ENCODE measurements at regions of chr2 and their contacts with region 1.

Region 1: GRCh38 chr2:35410431-35411061 is 945.0 kb upstream of the CRIM1 start:
- DNase-seq: peak; percentile 33
- ATAC-seq: peak; percentile 79
- H3K4me3 ChIP-seq: no peak overlapping the region
- H3K27ac ChIP-seq: no peak overlapping the region
- H3K4me1 ChIP-seq: no peaks in the 10 kb centered on the region
- H3K27me3 ChIP-seq: no peaks in the 10 kb centered on the region
- CTCF ChIP-seq: peak; percentile 78
- EP300 ChIP-seq: no peak
- POLR2A ChIP-seq: no peak
- RAD21 ChIP-seq: no peak

Region 2: DNA sequence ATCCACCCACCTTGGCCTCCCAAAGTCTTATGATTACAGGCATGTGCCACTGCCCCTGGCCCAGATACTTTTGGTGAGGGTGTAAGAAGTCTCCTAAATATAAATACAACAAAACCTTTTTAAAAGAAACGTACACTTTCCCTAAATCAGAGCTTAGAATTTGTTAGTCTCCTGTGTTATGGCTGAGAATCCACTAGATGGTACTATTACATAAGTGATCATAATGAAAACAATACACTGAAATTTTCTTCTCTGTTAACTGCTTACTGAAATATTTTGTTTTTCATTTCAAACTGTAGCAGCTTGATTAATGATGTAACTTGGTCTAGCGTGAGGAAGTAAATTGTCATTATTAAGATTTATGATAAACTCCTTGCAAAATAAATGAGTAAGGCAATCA is 1736.6 kb before region 1 on chr2:
- CTCF ChIA-PET with region 1: no interaction called
- POLR2A ChIA-PET with region 1: no interaction called
- in situ Hi-C with region 1: no loop called
- intact Hi-C with region 1: loop called (anchors 2 kb)
- DNase-seq: no peak
- ATAC-seq: no peak
- H3K4me3 ChIP-seq: no peak overlapping the region
- H3K27ac ChIP-seq: no peak overlapping the region
- H3K4me1 ChIP-seq: no peaks in the 10 kb centered on the region
- H3K27me3 ChIP-seq: no peaks in the 10 kb centered on the region
- CTCF ChIP-seq: peak; percentile 43
- EP300 ChIP-seq: no peak
- POLR2A ChIP-seq: no peak
- RAD21 ChIP-seq: no peak

Region 3: GRCh38 chr2:34012715-34013302 is 1397.7 kb before region 1 on chr2:
- CTCF ChIA-PET with region 1: interaction called, 3 read pairs
- POLR2A ChIA-PET with region 1: no interaction called
- in situ Hi-C with region 1: no loop called
- intact Hi-C with region 1: loop called (anchors 1 kb)
- DNase-seq: peak; percentile 53
- ATAC-seq: peak; percentile 98
- H3K4me3 ChIP-seq: no peak overlapping the region
- H3K27ac ChIP-seq: no peak overlapping the region
- H3K4me1 ChIP-seq: no peaks in the 10 kb centered on the region
- H3K27me3 ChIP-seq: no peaks in the 10 kb centered on the region
- CTCF ChIP-seq: peak; percentile 85
- EP300 ChIP-seq: no peak
- POLR2A ChIP-seq: no peak
- RAD21 ChIP-seq: peak; percentile 68

Region 4: DNA sequence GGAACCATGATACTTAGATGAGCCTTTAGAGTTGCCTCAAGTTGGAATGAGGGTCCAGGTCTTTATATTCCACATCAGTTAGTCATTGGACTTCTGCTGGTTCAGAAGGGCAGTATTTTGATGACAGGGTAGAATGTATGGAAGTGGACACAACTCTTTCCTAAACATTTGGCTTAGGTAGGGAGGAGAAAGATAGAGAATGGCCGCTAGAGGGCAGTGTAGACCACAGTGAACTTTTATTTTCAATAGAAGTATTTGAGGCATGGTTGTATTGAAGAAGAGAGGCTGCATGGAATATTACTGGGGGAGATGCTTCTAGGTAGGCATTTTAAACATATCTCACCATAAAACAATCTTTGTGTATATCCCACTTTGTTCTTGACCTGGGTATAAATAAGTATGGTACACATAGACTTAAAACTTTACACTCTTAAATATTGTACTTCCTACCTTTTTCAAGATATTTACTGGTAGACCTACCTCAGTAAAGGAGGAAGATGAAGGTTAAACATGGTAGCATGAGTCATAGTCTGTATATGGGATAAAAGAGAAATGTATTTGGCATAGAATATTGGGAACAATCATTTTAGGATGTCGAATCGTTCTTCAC is 1313.9 kb before region 1 on chr2:
- CTCF ChIA-PET with region 1: interaction called, 26 read pairs
- POLR2A ChIA-PET with region 1: no interaction called
- in situ Hi-C with region 1: loop called (anchors 10 kb)
- intact Hi-C with region 1: loop called (anchors 1 kb)
- DNase-seq: peak; percentile 53
- ATAC-seq: peak; percentile 93
- H3K4me3 ChIP-seq: no peak overlapping the region
- H3K27ac ChIP-seq: no peak overlapping the region
- H3K4me1 ChIP-seq: no peaks in the 10 kb centered on the region
- H3K27me3 ChIP-seq: no peaks in the 10 kb centered on the region
- CTCF ChIP-seq: peak; percentile 81
- EP300 ChIP-seq: no peak
- POLR2A ChIP-seq: no peak
- RAD21 ChIP-seq: peak; percentile 52; the same call in 1 of the 2 replicates

Region 5: DNA sequence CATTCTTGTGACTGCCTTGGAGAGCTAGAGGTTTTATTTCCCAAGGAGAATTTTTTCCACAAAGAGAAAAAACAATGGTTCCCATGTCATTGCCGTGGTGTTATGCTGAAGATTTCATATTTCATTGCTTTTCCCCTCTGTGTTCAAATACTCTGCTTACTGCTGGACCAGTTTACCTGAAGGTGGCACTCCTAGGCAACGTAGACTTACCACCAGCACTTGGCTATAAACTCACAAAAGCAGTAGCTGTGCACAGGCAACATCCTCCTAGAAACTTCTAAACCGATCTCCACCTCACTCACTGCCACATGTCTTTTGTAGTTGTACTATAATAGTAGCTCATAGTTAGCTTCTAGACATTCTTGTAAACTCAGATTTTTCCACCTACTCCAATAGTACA is 374.7 kb before region 1 on chr2:
- CTCF ChIA-PET with region 1: no interaction called
- POLR2A ChIA-PET with region 1: no interaction called
- in situ Hi-C with region 1: no loop called
- intact Hi-C with region 1: loop called (anchors 1 kb)
- DNase-seq: no peak
- ATAC-seq: no peak
- H3K4me3 ChIP-seq: no peak overlapping the region
- H3K27ac ChIP-seq: no peak overlapping the region
- H3K4me1 ChIP-seq: no peaks in the 10 kb centered on the region
- H3K27me3 ChIP-seq: no peaks in the 10 kb centered on the region
- CTCF ChIP-seq: no peak
- EP300 ChIP-seq: no peak
- POLR2A ChIP-seq: no peak
- RAD21 ChIP-seq: no peak

Region 6: GRCh38 chr2:35168354-35168753 is 242.2 kb before region 1 on chr2:
- CTCF ChIA-PET with region 1: interaction called, 13 read pairs
- POLR2A ChIA-PET with region 1: no interaction called
- in situ Hi-C with region 1: no loop called
- intact Hi-C with region 1: loop called (anchors 1 kb)
- DNase-seq: no peak
- ATAC-seq: no peak
- H3K4me3 ChIP-seq: no peak overlapping the region
- H3K27ac ChIP-seq: no peak overlapping the region
- H3K4me1 ChIP-seq: no peaks in the 10 kb centered on the region
- H3K27me3 ChIP-seq: no peaks in the 10 kb centered on the region
- CTCF ChIP-seq: no peak
- EP300 ChIP-seq: no peak
- POLR2A ChIP-seq: no peak
- RAD21 ChIP-seq: no peak

Measured in HepG2 (cell line).